ENCODE measurements at regions of chrX and their contacts with region 1.

Region 1: DNA sequence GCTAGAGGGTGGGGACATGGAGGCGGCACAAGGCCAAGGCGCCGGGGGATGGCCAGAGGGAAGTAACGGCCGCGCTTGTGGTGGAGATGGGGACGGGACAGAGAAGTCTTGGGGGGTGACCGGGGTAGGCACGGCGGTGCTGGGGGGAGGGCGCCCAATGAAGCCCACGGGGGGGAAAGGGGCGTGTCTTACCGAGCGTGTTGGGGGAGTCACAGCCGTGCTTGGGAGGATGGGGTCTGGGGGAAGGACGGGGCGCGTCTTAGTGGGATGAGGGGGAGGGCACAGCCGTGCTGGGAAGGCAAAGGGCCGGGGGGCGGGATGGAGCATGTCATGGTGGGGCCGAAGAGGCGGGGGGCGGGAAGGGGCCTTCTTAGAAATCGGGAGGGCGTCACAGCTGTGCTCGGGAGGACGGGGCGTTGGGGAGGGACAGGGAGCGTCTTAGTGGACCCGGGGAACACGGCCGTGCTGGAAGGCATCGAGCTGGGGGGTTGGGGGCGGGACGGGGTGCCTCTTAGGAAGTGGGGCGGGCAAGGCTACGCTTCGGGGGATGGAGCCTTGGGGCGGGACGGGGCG is 862 bp downstream of the ARSD start:
- DNase-seq: peak; percentile 62
- H3K4me3 ChIP-seq: peak overlapping the region; percentile 24 to 51 (median 40)
- H3K27ac ChIP-seq: peak overlapping the region; percentile 77
- H3K4me1 ChIP-seq: no peaks in the 10 kb centered on the region
- H3K27me3 ChIP-seq: no peaks in the 10 kb centered on the region
- CTCF ChIP-seq: no peak
- POLR2A ChIP-seq: no peak

Region 2: DNA sequence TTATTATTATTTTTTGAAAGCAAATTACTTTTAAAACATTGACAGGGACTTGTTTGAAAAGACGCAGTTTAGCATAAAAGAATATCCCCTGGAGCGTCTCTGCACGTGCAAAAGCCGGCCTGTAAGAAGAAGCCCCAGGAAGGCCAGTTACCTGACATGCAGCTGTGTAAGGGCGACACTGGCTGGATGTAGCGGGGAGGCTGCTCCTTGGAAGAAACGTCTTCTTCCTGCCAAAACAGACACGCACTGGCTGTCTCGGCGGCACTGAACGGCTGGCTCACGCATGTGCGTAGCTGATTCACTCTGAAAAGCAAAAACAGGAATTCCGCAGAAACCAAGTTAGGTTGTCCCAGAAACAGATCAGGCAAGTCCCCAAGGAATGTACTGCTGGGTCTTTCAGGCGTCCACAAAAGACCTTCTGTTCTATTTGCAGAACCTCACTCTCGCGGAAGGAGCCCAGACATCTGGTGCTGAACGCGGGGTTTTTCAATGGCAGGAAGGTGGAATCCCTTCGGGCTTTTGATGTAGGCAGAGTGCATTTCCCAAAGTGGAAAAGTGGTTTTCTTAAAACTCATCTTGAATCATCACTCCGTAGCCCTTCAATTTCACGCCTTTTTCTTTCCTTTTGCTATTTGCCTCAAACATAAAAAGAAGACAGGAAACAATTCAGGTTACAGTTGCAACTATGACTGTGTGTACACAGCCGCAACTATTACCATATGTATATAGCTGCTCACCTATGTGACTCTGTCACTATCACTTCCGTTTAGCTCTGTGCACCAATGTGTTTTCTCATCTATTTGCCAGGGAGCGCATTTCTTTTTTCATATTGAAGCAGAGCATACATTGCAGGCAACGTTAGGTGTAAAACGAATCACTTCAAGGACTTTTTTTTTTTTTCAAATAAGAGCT is 40.0 kb after region 1 on chrX:
- CTCF ChIA-PET with region 1: no interaction called
- POLR2A ChIA-PET with region 1: interaction called, 15 read pairs
- dilution Hi-C with region 1: no loop called
- intact Hi-C with region 1: loop called (anchors 1 kb)
- DNase-seq: peak; percentile 5
- H3K4me3 ChIP-seq: peak overlapping the region in 1 of 3 experiments; percentile 19
- H3K27ac ChIP-seq: no peak overlapping the region
- H3K4me1 ChIP-seq: peaks cover 11% of the 10 kb centered on the region
- H3K27me3 ChIP-seq: no peaks in the 10 kb centered on the region
- CTCF ChIP-seq: no peak
- POLR2A ChIP-seq: no peak

Region 3: GRCh38 chrX:3029129-3029528 is 100.9 kb after region 1 on chrX:
- CTCF ChIA-PET with region 1: no interaction called
- POLR2A ChIA-PET with region 1: no interaction called
- dilution Hi-C with region 1: no loop called
- intact Hi-C with region 1: loop called (anchors 2 kb)
- DNase-seq: no peak
- H3K4me3 ChIP-seq: no peak overlapping the region
- H3K27ac ChIP-seq: no peak overlapping the region
- H3K4me1 ChIP-seq: no peaks in the 10 kb centered on the region
- H3K27me3 ChIP-seq: no peaks in the 10 kb centered on the region
- CTCF ChIP-seq: no peak
- POLR2A ChIP-seq: no peak

Measured in endothelial cell of umbilical vein (primary cell).